Activated CD8-positive, alpha-beta T cell treated with anti-CD3 and anti-CD28 coated beads, Interleukin-2, amount 10 ng/mL, durations not matched to agents 7 days and 5 days (primary cell): ENCODE measurements at regions of chr11 and their contacts with region 1.

Region 1: GRCh38 chr11:118198370-118198769 is 21.9 kb upstream of the SCN2B start:
- DNase-seq: peak; percentile 90
- ATAC-seq: peak; percentile 31
- H3K4me3 Mint-ChIP-seq: peak overlapping the region; percentile 43
- H3K27ac Mint-ChIP-seq: peak overlapping the region; percentile 72
- H3K4me1 Mint-ChIP-seq: peaks cover 17% of the 10 kb centered on the region
- H3K27me3 Mint-ChIP-seq: no peaks in the 10 kb centered on the region

Region 2: DNA sequence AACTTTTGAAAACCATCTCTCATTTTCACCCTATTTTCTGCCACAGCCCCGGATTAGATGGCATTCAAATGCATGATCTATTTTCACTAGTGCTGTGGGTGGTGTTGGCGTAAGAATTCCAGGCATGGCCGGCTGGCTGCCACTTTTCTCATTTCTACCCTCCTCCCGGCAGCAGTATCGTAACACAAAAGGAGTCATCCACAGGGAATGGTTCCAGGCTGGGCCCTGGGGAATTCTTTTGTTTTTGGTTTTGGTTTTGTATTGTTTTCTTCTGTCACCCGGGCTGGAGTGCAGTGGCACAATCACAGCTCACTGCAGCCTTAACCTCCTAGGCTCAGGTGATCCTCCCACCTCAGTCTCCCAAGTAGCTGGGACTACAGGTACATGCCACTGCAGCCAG is 12.6 kb after region 1 on chr11:
- CTCF ChIA-PET with region 1: interaction called, 128 read pairs
- POLR2A ChIA-PET with region 1: interaction called, 101 read pairs
- DNase-seq: no peak
- ATAC-seq: no peak
- H3K4me3 Mint-ChIP-seq: no peak overlapping the region
- H3K27ac Mint-ChIP-seq: peak overlapping the region; percentile 58
- H3K4me1 Mint-ChIP-seq: peaks cover 93% of the 10 kb centered on the region
- H3K27me3 Mint-ChIP-seq: no peaks in the 10 kb centered on the region

Region 3: DNA sequence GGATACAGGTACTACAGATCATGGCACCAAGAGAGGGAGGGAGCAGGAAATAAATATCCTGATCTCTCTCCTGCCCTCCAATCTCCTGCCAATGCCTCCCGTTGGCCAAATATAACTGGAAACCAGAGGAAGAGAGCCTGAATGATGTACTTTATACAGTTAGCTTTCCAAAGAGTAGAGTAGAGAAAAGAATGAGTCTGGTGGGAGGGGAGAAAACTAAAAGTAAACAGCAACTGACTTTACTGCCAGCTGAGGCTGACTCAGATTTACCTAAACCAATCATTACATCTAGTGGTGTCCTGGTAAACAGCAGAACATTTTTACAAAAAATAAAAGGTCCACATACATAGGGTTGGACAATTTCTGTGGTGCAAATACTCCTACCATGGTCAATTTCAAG is 48.7 kb after region 1 on chr11:
- CTCF ChIA-PET with region 1: interaction called, 35 read pairs
- POLR2A ChIA-PET with region 1: interaction called, 12 read pairs
- DNase-seq: peak; percentile 25
- ATAC-seq: peak; percentile 21
- H3K4me3 Mint-ChIP-seq: no peak overlapping the region
- H3K27ac Mint-ChIP-seq: peak overlapping the region; percentile 78
- H3K4me1 Mint-ChIP-seq: peaks cover 74% of the 10 kb centered on the region
- H3K27me3 Mint-ChIP-seq: no peaks in the 10 kb centered on the region

Region 4: DNA sequence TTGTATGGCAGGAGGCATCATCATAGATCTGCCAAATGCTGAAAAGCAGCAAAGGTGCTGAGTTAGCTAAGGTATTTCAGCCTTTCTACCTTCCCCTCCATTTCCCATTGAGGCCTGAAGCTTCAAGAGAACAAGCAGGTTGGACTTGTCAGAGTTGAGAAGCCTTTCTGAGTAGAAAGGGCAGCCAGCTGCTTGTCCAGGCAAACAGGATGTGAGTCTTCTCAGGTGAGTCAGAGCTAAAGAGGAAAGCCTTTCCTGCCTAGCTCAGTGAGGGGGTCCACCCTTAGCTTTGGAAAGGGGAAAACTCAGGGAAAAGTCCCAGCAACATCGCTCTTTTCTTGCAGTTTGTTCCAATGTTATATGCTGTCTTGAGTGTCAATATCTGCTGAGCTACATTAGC is 78.9 kb after region 1 on chr11:
- CTCF ChIA-PET with region 1: interaction called, 52 read pairs
- POLR2A ChIA-PET with region 1: no interaction called
- DNase-seq: peak; percentile 43
- ATAC-seq: peak; percentile 55
- H3K4me3 Mint-ChIP-seq: no peak overlapping the region
- H3K27ac Mint-ChIP-seq: no peak overlapping the region
- H3K4me1 Mint-ChIP-seq: peaks cover 53% of the 10 kb centered on the region
- H3K27me3 Mint-ChIP-seq: no peaks in the 10 kb centered on the region

Region 5: GRCh38 chr11:118304568-118305248 is 106.3 kb after region 1 on chr11 and contains the start of gene CD3E:
- CTCF ChIA-PET with region 1: interaction called, 28 read pairs
- POLR2A ChIA-PET with region 1: interaction called, 4 read pairs
- DNase-seq: peak; percentile 87
- ATAC-seq: peak; percentile 82
- H3K4me3 Mint-ChIP-seq: peak within 1 kb of the TSS; percentile 99
- H3K27ac Mint-ChIP-seq: peak within 1 kb of the TSS; percentile 99
- H3K4me1 Mint-ChIP-seq: peaks cover 64% of the 10 kb centered on the region
- H3K27me3 Mint-ChIP-seq: no peaks in the 10 kb centered on the region
- total RNA-seq, gene CD3E: 515 to 530 TPM

Region 6: DNA sequence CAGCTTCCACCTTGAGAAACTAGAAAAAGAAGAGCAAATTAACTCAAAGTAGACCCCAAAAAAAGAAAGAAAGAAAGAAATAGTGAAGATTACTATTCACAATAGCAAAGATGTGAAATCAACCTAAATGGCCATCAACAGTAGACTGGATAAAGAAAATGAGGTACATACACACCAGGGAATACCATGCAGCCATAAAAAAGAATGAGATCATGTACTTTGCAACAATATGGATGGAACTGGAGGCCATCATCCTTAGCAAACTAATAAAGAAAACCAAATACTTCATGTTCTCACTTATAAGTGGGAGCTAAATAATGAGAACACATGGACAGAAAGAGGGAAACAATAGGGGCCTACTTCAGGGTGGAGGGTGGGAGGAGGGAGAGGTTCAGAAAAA is 130.4 kb after region 1 on chr11:
- CTCF ChIA-PET with region 1: no interaction called
- POLR2A ChIA-PET with region 1: no interaction called
- DNase-seq: no peak
- ATAC-seq: no peak
- H3K4me3 Mint-ChIP-seq: no peak overlapping the region
- H3K27ac Mint-ChIP-seq: no peak overlapping the region
- H3K4me1 Mint-ChIP-seq: peaks cover 6% of the 10 kb centered on the region
- H3K27me3 Mint-ChIP-seq: no peaks in the 10 kb centered on the region

Region 7: GRCh38 chr11:118353084-118353710 is 154.8 kb after region 1 on chr11:
- CTCF ChIA-PET with region 1: interaction called, 13 read pairs
- POLR2A ChIA-PET with region 1: no interaction called
- DNase-seq: no peak
- ATAC-seq: peak; percentile 37
- H3K4me3 Mint-ChIP-seq: no peak overlapping the region
- H3K27ac Mint-ChIP-seq: peak overlapping the region; percentile 70
- H3K4me1 Mint-ChIP-seq: peaks cover 39% of the 10 kb centered on the region
- H3K27me3 Mint-ChIP-seq: no peaks in the 10 kb centered on the region